WTC11 (cell line): ENCODE measurements at regions of chr22 and their contacts with region 1.

Region 1: DNA sequence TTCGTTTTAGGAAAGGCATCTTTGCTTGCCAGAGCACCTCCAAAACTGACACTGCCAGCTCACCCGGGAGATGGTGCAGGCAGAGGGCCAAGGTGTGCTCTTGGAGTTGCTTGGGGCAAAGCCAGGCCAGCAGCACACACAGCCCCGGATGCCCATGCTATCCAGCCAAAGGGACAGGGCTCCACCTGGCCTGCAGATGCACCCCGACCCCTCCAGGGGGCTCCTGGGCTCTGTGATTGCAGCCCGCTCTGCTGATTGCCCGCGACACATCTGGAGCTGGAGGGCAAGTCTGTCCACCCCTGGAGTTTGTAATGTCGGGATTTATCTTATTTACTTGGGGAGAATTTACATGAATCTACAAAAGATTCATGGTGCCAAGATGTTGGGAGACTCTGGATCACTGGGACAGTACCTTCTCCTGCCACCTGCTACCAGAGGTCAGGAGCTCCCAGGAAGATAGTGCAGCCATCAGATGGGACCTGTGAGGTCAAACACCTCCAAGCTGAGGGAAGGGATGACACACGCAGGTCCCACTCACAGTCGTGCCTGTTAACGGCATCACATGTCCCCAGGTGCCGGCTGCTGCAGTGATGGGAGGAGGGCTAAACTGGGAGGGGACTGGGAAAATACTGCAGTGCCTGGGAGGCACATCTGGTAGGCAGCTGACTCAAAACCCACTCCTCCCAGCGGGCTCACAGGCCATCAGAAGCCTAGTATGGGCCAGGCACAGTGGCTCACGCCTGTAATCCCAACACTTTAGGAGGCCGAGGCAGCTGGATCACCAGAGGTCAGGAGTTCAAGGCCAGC is 17.2 kb downstream of the CBX7 start:
- DNase-seq: peak; percentile 90
- ATAC-seq: peak; percentile 94
- H3K4me3 Mint-ChIP-seq: no peak overlapping the region
- H3K27ac Mint-ChIP-seq: peak overlapping the region; percentile 79
- H3K4me1 Mint-ChIP-seq: peaks cover 28% of the 10 kb centered on the region
- H3K27me3 Mint-ChIP-seq: no peaks in the 10 kb centered on the region; the same call in 1 of the 2 replicates
- CTCF ChIP-seq: peak; percentile 67

Region 2: DNA sequence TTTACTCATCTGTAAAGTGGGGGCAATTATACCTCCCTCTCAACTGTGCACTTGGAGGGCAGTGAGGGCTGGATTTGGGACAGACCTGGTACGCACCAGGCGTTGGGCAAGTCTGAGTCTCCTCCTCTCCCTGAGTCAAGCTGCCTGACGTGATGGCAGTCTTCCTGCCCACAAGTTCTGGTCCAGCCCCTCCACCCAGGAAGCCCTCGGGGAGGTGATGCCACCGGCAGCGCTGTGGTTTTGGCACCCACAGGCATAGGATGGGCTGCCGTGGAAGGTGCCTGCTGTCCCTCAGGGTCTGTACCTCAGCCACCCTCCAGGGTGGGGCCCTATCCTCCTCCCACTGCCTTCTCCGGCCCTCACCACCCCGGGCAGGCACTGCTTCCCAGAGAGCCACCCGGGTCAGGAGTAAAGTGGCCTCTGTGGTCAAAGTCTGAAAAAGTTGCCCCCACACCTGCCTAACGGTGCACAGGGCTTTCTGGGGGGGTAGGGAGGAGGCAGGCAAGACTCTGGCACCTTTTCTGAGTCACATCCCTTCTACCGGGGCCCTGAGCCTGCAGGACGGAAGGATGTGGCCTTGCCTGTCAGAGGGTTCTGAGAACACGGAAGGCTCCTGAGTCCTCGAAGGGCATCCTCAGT is 44.7 kb before region 1 on chr22:
- CTCF ChIA-PET with region 1: no interaction called
- POLR2A ChIA-PET with region 1: no interaction called
- DNase-seq: no peak
- ATAC-seq: no peak
- H3K4me3 Mint-ChIP-seq: no peak overlapping the region
- H3K27ac Mint-ChIP-seq: no peak overlapping the region
- H3K4me1 Mint-ChIP-seq: peaks cover 18% of the 10 kb centered on the region
- H3K27me3 Mint-ChIP-seq: peaks cover 3% of the 10 kb centered on the region; the same call in 1 of the 2 replicates
- CTCF ChIP-seq: no peak

Region 3: GRCh38 chr22:39123751-39124601 is 11.3 kb before region 1 on chr22:
- CTCF ChIA-PET with region 1: interaction called, 20 read pairs
- POLR2A ChIA-PET with region 1: interaction called, 3 read pairs
- DNase-seq: peak; percentile 50
- ATAC-seq: peak; percentile 84
- H3K4me3 Mint-ChIP-seq: peak overlapping the region; percentile 36
- H3K27ac Mint-ChIP-seq: no peak overlapping the region
- H3K4me1 Mint-ChIP-seq: peaks cover 6% of the 10 kb centered on the region
- H3K27me3 Mint-ChIP-seq: no peaks in the 10 kb centered on the region
- CTCF ChIP-seq: no peak

Region 4: DNA sequence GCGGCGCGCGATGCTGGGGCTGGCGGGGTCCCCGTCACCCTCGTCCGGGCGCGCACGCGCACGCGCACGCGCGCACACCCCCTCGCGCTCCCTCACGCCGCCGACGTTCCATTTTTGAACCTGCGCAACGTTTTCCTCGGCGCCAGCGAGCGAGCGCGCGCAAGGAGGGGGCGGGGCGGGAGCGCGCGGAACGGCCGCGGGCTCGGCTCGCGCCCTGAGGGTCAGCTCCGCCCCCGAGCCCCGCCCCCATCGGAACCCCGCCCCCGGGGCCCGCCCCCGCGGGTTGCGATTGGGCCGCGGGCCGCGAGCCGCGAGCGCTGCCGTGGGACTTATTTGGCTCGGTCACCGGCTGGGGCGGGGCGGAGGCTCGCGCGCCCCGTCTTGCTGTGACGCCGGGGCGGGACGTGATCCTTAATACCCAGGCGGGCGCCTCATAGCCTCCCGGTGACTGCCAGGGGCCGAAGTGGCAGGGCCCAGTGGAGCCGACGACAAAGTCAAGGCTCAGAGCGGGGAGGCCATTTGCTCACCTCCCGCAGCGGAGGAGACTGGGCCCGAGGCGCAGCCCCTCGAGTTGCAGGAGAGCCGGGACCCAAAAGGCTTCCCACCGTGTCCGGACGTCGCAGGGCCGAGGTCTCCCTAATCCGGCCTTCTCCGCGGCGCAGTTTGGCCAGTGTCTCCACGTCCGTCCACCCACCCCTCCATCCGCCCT is 17.4 kb after region 1 on chr22 and contains the start of gene CBX7:
- CTCF ChIA-PET with region 1: interaction called, 54 read pairs
- POLR2A ChIA-PET with region 1: interaction called, 3 read pairs
- DNase-seq: peak; percentile 87
- ATAC-seq: peak; percentile 68
- H3K4me3 Mint-ChIP-seq: peak within 1 kb of the TSS; percentile 71
- H3K27ac Mint-ChIP-seq: no peak within 1 kb of the TSS
- H3K4me1 Mint-ChIP-seq: peaks cover 26% of the 10 kb centered on the region
- H3K27me3 Mint-ChIP-seq: peaks cover 42% of the 10 kb centered on the region
- CTCF ChIP-seq: no peak
- total RNA-seq, gene CBX7: 10.6 to 11.1 TPM (median 10.6 TPM) in 3 replicates